Naive thymus-derived CD4-positive, alpha-beta T cell (primary cell): ENCODE measurements at regions of chr17 and their contacts with region 1.

Region 1: GRCh38 chr17:19867064-19867313 is 747 bp downstream of the ULK2 start:
- DNase-seq: peak in 6 of 9 donors; percentile 26 to 51 (median 46)
- ATAC-seq: peak; percentile 58
- H3K4me3 ChIP-seq: peak overlapping the region; percentile 78
- H3K4me3 Mint-ChIP-seq: peak overlapping the region; percentile 77 to 88 (median 84)
- H3K27ac ChIP-seq: peak overlapping the region; percentile 72
- H3K27ac Mint-ChIP-seq: peak overlapping the region; percentile 62 to 82 (median 75)
- H3K4me1 ChIP-seq: peaks cover 4 to 34% of the 10 kb centered on the region in 2 donors
- H3K4me1 Mint-ChIP-seq: peaks cover 9 to 66% (median 45%) of the 10 kb centered on the region in 7 donors
- H3K27me3 ChIP-seq: no peaks in the 10 kb centered on the region
- H3K27me3 Mint-ChIP-seq: no peaks in the 10 kb centered on the region

Region 2: GRCh38 chr17:19507775-19508576 is 359.0 kb before region 1 on chr17:
- CTCF ChIA-PET with region 1: no interaction called
- POLR2A ChIA-PET with region 1: no interaction called
- intact Hi-C with region 1: loop called in 1 of 2 experiments (anchors 5 kb)
- DNase-seq: peak; percentile 82 to 96 (median 90)
- ATAC-seq: peak; percentile 85
- H3K4me3 ChIP-seq: peak overlapping the region; percentile 99
- H3K4me3 Mint-ChIP-seq: peak overlapping the region; percentile 87 to 99 (median 91)
- H3K27ac ChIP-seq: peak overlapping the region; percentile 67
- H3K27ac Mint-ChIP-seq: peak overlapping the region; percentile 95 to 99 (median 96)
- H3K4me1 ChIP-seq: peaks cover 0 to 6% of the 10 kb centered on the region in 2 donors
- H3K4me1 Mint-ChIP-seq: peaks cover 8 to 13% (median 11%) of the 10 kb centered on the region in 7 donors
- H3K27me3 ChIP-seq: no peaks in the 10 kb centered on the region
- H3K27me3 Mint-ChIP-seq: peaks cover 0 to 24% (median 0%) of the 10 kb centered on the region in 5 donors

Region 3: GRCh38 chr17:19897901-19898300 is 30.9 kb after region 1 on chr17:
- CTCF ChIA-PET with region 1: interaction called, 5 read pairs
- POLR2A ChIA-PET with region 1: interaction called, 3 read pairs
- intact Hi-C with region 1: loop called in 1 of 2 experiments (anchors 1 kb)
- DNase-seq: no peak
- ATAC-seq: no peak
- H3K4me3 ChIP-seq: no peak overlapping the region
- H3K4me3 Mint-ChIP-seq: no peak overlapping the region
- H3K27ac ChIP-seq: no peak overlapping the region
- H3K27ac Mint-ChIP-seq: peak overlapping the region in 5 of 9 donors; percentile 2 to 84 (median 11)
- H3K4me1 ChIP-seq: no peaks in the 10 kb centered on the region
- H3K4me1 Mint-ChIP-seq: peaks cover 0 to 13% (median 11%) of the 10 kb centered on the region in 7 donors
- H3K27me3 ChIP-seq: no peaks in the 10 kb centered on the region
- H3K27me3 Mint-ChIP-seq: no peaks in the 10 kb centered on the region

Region 4: GRCh38 chr17:19911033-19911432 is 44.0 kb after region 1 on chr17:
- CTCF ChIA-PET with region 1: interaction called, 3 read pairs
- POLR2A ChIA-PET with region 1: interaction called, 8 read pairs
- intact Hi-C with region 1: loop called in 1 of 2 experiments (anchors 5 kb)
- DNase-seq: no peak
- ATAC-seq: no peak
- H3K4me3 ChIP-seq: no peak overlapping the region
- H3K4me3 Mint-ChIP-seq: no peak overlapping the region
- H3K27ac ChIP-seq: no peak overlapping the region
- H3K27ac Mint-ChIP-seq: peak overlapping the region in 5 of 9 donors; percentile 0 to 64 (median 38)
- H3K4me1 ChIP-seq: no peaks in the 10 kb centered on the region
- H3K4me1 Mint-ChIP-seq: peaks cover 2 to 14% (median 10%) of the 10 kb centered on the region in 7 donors
- H3K27me3 ChIP-seq: no peaks in the 10 kb centered on the region
- H3K27me3 Mint-ChIP-seq: no peaks in the 10 kb centered on the region